ENCODE measurements at regions of chr5 and their contacts with region 1.

Region 1: GRCh38 chr5:107673368-107674136 is 2.8 kb upstream of the EFNA5 start:
- DNase-seq: peak; percentile 88 to 90
- H3K4me3 ChIP-seq: peak overlapping the region; percentile 44
- H3K4me3 Mint-ChIP-seq: peak overlapping the region; percentile 85
- H3K27ac Mint-ChIP-seq: no peak overlapping the region
- H3K4me1 ChIP-seq: peaks cover 1% of the 10 kb centered on the region; the same call in 1 of the 2 replicates
- H3K4me1 Mint-ChIP-seq: peaks cover 5% of the 10 kb centered on the region
- H3K27me3 ChIP-seq: peaks cover 4% of the 10 kb centered on the region
- H3K27me3 Mint-ChIP-seq: peaks cover 29% of the 10 kb centered on the region
- CTCF ChIP-seq: peak; percentile 94 to 98

Region 2: GRCh38 chr5:107104040-107104995 is 569.2 kb before region 1 on chr5:
- CTCF ChIA-PET with region 1: no interaction called
- POLR2A ChIA-PET with region 1: no interaction called
- intact Hi-C with region 1: loop called (anchors 1 kb)
- DNase-seq: peak in 1 of 2 experiments; percentile 28
- H3K4me3 ChIP-seq: no peak overlapping the region
- H3K4me3 Mint-ChIP-seq: no peak overlapping the region
- H3K27ac Mint-ChIP-seq: no peak overlapping the region
- H3K4me1 ChIP-seq: no peaks in the 10 kb centered on the region
- H3K4me1 Mint-ChIP-seq: no peaks in the 10 kb centered on the region
- H3K27me3 ChIP-seq: no peaks in the 10 kb centered on the region
- H3K27me3 Mint-ChIP-seq: peaks cover 2% of the 10 kb centered on the region
- CTCF ChIP-seq: peak in 1 of 2 experiments; percentile 47

Region 3: GRCh38 chr5:107306597-107306996 is 367.0 kb before region 1 on chr5:
- CTCF ChIA-PET with region 1: no interaction called
- POLR2A ChIA-PET with region 1: no interaction called
- intact Hi-C with region 1: loop called (anchors 1 kb)
- DNase-seq: no peak
- H3K4me3 ChIP-seq: no peak overlapping the region
- H3K4me3 Mint-ChIP-seq: no peak overlapping the region
- H3K27ac Mint-ChIP-seq: no peak overlapping the region
- H3K4me1 ChIP-seq: no peaks in the 10 kb centered on the region
- H3K4me1 Mint-ChIP-seq: peaks cover 7% of the 10 kb centered on the region
- H3K27me3 ChIP-seq: no peaks in the 10 kb centered on the region
- H3K27me3 Mint-ChIP-seq: peaks cover 4% of the 10 kb centered on the region
- CTCF ChIP-seq: no peak

Region 4: DNA sequence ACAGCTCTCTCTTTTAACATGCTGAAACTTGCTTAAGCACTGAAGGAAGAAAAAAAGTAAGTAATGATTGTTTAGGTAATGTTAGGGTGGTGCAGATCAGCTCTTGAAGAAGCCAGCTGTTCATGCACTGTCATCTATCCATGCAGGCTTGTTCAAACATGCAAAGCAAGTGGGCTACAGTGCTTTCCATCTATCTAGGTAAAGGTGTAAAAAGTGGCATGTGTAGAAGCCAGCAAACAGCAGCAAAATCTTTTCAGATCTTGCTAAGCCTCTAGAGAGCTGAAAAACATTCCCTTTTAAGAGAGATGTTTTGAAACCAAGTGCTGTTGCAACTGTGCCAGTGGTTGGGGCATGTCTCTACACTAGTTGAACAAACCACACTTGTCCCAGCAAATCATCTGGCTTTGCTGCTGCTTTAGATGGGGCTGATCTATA is 217.3 kb before region 1 on chr5:
- CTCF ChIA-PET with region 1: no interaction called
- POLR2A ChIA-PET with region 1: no interaction called
- intact Hi-C with region 1: loop called (anchors 2 kb)
- DNase-seq: no peak
- H3K4me3 ChIP-seq: no peak overlapping the region
- H3K4me3 Mint-ChIP-seq: no peak overlapping the region
- H3K27ac Mint-ChIP-seq: no peak overlapping the region
- H3K4me1 ChIP-seq: peaks cover 34% of the 10 kb centered on the region
- H3K4me1 Mint-ChIP-seq: peaks cover 27% of the 10 kb centered on the region
- H3K27me3 ChIP-seq: no peaks in the 10 kb centered on the region
- H3K27me3 Mint-ChIP-seq: no peaks in the 10 kb centered on the region
- CTCF ChIP-seq: no peak

Region 5: GRCh38 chr5:107571621-107572536 is 101.7 kb before region 1 on chr5:
- CTCF ChIA-PET with region 1: interaction called, 5 read pairs
- POLR2A ChIA-PET with region 1: no interaction called
- intact Hi-C with region 1: loop called (anchors 1 kb)
- DNase-seq: peak; percentile 91 to 93
- H3K4me3 ChIP-seq: peak overlapping the region; percentile 36
- H3K4me3 Mint-ChIP-seq: peak overlapping the region; percentile 70
- H3K27ac Mint-ChIP-seq: no peak overlapping the region
- H3K4me1 ChIP-seq: peaks cover 10% of the 10 kb centered on the region
- H3K4me1 Mint-ChIP-seq: peaks cover 13% of the 10 kb centered on the region
- H3K27me3 ChIP-seq: no peaks in the 10 kb centered on the region
- H3K27me3 Mint-ChIP-seq: no peaks in the 10 kb centered on the region
- CTCF ChIP-seq: peak; percentile 94 to 95

Region 6: GRCh38 chr5:107781451-107781850 is 107.9 kb after region 1 on chr5:
- CTCF ChIA-PET with region 1: no interaction called
- POLR2A ChIA-PET with region 1: no interaction called
- intact Hi-C with region 1: loop called (anchors 5 kb)
- DNase-seq: no peak
- H3K4me3 ChIP-seq: no peak overlapping the region
- H3K4me3 Mint-ChIP-seq: no peak overlapping the region
- H3K27ac Mint-ChIP-seq: no peak overlapping the region
- H3K4me1 ChIP-seq: peaks cover 20% of the 10 kb centered on the region
- H3K4me1 Mint-ChIP-seq: peaks cover 15% of the 10 kb centered on the region
- H3K27me3 ChIP-seq: no peaks in the 10 kb centered on the region
- H3K27me3 Mint-ChIP-seq: peaks cover 7% of the 10 kb centered on the region
- CTCF ChIP-seq: no peak